PC-3 (cell line): ENCODE measurements at regions of chr21 and their contacts with region 1.

Region 1: GRCh38 chr21:14403681-14404318 is 20.9 kb upstream of the HSPA13 start:
- DNase-seq: peak; percentile 65
- ATAC-seq: peak; percentile 80
- H3K4me3 ChIP-seq: no peak overlapping the region
- H3K27ac ChIP-seq: no peak overlapping the region
- H3K4me1 ChIP-seq: no peaks in the 10 kb centered on the region
- H3K27me3 ChIP-seq: no peaks in the 10 kb centered on the region
- CTCF ChIP-seq: peak; percentile 86

Region 2: GRCh38 chr21:14366998-14367397 is 36.8 kb before region 1 on chr21:
- CTCF ChIA-PET with region 1: no interaction called
- POLR2A ChIA-PET with region 1: no interaction called
- intact Hi-C with region 1: no loop called
- DNase-seq: no peak
- ATAC-seq: no peak
- H3K4me3 ChIP-seq: no peak overlapping the region
- H3K27ac ChIP-seq: no peak overlapping the region
- H3K4me1 ChIP-seq: no peaks in the 10 kb centered on the region
- H3K27me3 ChIP-seq: peaks cover 22% of the 10 kb centered on the region
- CTCF ChIP-seq: no peak

Region 3: GRCh38 chr21:14773777-14774345 is 370.1 kb after region 1 on chr21:
- CTCF ChIA-PET with region 1: no interaction called
- POLR2A ChIA-PET with region 1: no interaction called
- intact Hi-C with region 1: loop called (anchors 10 kb)
- DNase-seq: peak; percentile 77
- ATAC-seq: peak; percentile 67
- H3K4me3 ChIP-seq: no peak overlapping the region
- H3K27ac ChIP-seq: no peak overlapping the region
- H3K4me1 ChIP-seq: no peaks in the 10 kb centered on the region
- H3K27me3 ChIP-seq: no peaks in the 10 kb centered on the region
- CTCF ChIP-seq: peak; percentile 89

Region 4: GRCh38 chr21:14814991-14815390 is 411.2 kb after region 1 on chr21:
- CTCF ChIA-PET with region 1: no interaction called
- POLR2A ChIA-PET with region 1: no interaction called
- intact Hi-C with region 1: no loop called
- DNase-seq: no peak
- ATAC-seq: no peak
- H3K4me3 ChIP-seq: no peak overlapping the region
- H3K27ac ChIP-seq: no peak overlapping the region
- H3K4me1 ChIP-seq: no peaks in the 10 kb centered on the region
- H3K27me3 ChIP-seq: no peaks in the 10 kb centered on the region
- CTCF ChIP-seq: no peak